ENCODE measurements at regions of chr1 and their contacts with region 1.

Region 1: GRCh38 chr1:219075121-219075879 is 98.4 kb upstream of the LYPLAL1 start:
- DNase-seq: no peak
- H3K4me3 ChIP-seq: no peak overlapping the region
- CTCF ChIP-seq: no peak
- POLR2A ChIP-seq: no peak

Region 2: GRCh38 chr1:218332416-218332815 is 742.9 kb before region 1 on chr1:
- intact Hi-C with region 1: loop called (anchors 2 kb)
- DNase-seq: no peak
- H3K4me3 ChIP-seq: no peak overlapping the region
- CTCF ChIP-seq: no peak
- POLR2A ChIP-seq: no peak

Region 3: DNA sequence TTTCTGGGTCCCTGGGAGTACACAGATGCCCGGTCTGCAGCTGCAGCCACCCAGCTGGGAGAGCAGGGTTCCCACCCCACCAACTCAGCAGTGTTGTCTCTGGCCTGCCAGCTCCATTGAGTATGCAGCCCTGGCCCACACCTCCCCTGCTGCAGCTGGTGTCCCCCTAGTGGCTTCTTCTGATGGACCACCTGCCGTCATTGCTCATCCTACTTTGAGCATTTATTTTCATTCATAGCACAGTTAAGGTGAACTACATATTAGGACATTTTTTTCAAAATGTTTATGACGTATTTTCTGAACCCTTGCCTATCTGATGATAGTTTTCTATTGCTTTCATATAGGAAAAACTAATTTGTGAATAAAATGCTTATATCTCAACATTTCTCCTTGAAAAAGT is 91.4 kb before region 1 on chr1:
- intact Hi-C with region 1: no loop called
- DNase-seq: no peak
- H3K4me3 ChIP-seq: no peak overlapping the region
- CTCF ChIP-seq: no peak
- POLR2A ChIP-seq: no peak